ENCODE measurements at regions of chr1 and their contacts with region 1.

Region 1: GRCh38 chr1:244652699-244653466 is at the start of gene DESI2:
- DNase-seq: peak; percentile 99
- total RNA-seq, gene DESI2: 23.0 TPM

Region 2: GRCh38 chr1:244047621-244048471 is 605.0 kb before region 1 on chr1:
- intact Hi-C with region 1: loop called (anchors 5 kb)
- DNase-seq: peak; percentile 100

Region 3: DNA sequence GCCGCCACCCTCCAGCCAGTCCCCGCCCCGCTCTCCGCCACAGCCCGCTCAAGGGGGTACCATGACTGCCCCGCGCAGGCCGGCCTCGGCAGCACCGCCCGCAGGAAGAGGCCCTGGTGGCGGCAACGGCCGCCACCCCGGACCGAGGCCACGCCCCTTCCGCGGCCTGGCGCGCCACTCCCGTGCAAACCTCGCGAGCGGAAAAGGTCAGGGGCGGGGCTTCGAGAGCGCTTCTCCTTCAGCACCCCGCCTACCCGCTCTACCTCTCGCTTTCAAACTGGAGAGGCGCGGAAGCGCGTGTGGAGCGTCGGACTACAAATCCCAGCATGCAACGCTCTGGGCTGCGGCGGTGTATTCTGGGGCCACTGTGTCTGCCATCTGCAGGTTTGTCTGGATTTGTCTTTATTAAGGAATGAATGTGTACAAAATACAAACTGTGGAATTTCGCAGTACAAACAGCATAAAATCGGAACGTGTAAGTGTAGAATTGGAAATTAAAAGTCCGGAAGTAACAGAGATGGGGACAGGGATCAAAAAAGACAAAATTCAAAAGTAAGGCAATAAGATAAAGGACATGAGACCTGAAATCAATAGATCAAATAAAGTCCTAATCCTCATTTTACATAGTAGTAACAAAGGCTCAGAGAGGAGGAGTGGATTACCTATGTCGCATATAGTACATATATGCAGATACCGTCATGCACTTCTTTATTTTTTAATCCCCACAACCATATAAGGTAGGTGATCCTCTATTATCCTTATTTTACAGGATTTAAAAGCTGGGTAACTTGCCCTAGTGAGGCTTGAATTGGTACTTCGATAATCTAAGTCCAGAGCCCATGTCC is 200.7 kb before region 1 on chr1:
- intact Hi-C with region 1: loop called (anchors 2 kb)
- DNase-seq: peak; percentile 99

Region 4: GRCh38 chr1:244730153-244730933 is 77.5 kb after region 1 on chr1:
- intact Hi-C with region 1: loop called (anchors 5 kb)
- DNase-seq: no peak

Region 5: GRCh38 chr1:244864253-244865027 is 211.6 kb after region 1 on chr1 and contains the start of gene HNRNPU:
- intact Hi-C with region 1: loop called (anchors 2 kb)
- DNase-seq: peak; percentile 98
- total RNA-seq, gene HNRNPU: 192 TPM

Region 6: DNA sequence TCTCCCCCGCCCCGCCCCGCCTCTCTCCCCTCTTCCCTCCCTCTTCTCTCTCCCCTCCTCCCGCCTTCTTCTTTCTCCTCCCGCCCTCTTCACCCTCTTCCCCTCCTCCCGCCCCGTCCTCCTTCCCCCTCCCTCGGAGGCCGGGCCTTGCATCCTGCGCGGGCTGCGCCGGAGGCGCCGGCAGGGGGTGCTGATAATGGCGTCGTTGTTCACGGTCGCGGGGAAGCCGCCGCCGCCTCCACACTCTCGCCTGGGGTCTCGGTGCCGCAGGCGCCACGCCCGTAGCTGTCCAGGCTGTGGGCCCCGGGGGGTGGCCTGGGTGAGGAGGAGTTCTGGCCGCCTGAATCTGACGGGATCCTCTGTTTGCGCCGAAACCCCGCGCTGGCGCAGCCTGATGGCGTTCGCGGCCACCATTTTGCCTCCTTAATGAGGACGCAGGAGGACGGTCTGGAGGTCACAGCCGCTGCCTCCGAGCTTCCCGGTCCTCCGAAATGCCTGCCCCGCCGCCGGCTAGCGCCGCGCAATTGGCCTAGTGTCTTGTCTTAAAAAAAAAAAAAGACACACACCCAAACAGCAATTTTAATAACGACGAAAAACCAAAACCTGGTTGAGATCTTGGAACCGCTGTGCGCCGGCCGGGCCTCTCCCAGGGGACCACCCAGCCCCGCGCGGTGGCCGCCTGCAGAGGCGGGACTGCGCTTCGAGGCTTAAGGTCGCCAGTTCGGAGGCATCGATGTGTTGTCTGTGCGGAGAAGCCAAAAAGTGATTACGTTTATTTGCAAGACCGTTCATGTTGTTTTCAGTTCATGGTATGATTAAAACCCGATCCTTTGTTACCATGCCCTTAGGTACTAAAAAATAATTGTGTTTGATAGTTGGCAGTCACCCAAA is 318.0 kb after region 1 on chr1:
- intact Hi-C with region 1: loop called (anchors 2 kb)
- DNase-seq: peak; percentile 96

Region 7: GRCh38 chr1:245301162-245301580 is 648.3 kb after region 1 on chr1:
- intact Hi-C with region 1: no loop called
- DNase-seq: no peak